ENCODE measurements at regions of chr6 and their contacts with region 1.

Region 1: DNA sequence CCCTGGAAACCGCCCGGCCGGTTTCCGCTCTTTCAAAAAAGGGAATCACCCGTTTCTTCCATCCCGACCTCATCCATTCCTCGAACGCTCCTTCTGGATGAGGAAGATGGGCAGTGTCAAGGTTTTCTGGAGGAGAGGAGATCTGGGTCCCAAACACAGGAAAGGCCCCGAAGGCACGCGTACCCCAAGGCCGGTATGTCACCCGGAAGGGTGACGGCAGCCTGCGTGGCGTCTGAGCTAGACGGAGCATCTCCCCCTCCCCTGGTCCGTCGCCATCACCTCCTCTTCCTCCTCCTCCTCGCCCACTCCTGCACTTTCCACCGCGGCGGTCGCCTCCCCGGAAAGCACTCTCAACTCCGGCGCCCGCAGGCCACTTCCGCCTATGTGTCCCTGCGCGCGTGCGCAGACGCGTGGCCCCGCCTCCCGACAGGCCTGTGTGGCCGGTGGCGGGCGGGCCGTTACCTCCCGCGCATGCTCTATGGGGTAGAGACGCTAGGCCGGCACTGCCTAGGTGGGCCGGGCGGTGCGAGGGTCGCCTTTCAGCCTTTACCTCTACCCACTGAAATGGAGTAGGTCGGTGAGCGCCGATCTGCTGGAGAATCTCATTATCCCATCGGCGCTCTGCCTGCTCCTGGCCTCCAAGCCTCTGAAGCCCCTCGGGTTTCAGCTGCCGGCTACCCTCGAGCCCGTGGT is at the start of gene SLC35B3:
- DNase-seq: peak; percentile 93 to 99 (median 97)
- ATAC-seq: peak; percentile 93
- H3K4me3 ChIP-seq: peak within 1 kb of the TSS; percentile 87 to 94
- H3K4me3 Mint-ChIP-seq: peak within 1 kb of the TSS; percentile 91
- H3K27ac ChIP-seq: peak within 1 kb of the TSS; percentile 89 to 90
- H3K27ac Mint-ChIP-seq: peak within 1 kb of the TSS; percentile 98
- H3K4me1 ChIP-seq: peaks cover 27% of the 10 kb centered on the region
- H3K4me1 Mint-ChIP-seq: peaks cover 49% of the 10 kb centered on the region
- H3K27me3 ChIP-seq: no peaks in the 10 kb centered on the region
- H3K27me3 Mint-ChIP-seq: no peaks in the 10 kb centered on the region
- CTCF ChIP-seq: no peak
- total RNA-seq, gene SLC35B3: 1.8 to 2.1 TPM

Region 2: DNA sequence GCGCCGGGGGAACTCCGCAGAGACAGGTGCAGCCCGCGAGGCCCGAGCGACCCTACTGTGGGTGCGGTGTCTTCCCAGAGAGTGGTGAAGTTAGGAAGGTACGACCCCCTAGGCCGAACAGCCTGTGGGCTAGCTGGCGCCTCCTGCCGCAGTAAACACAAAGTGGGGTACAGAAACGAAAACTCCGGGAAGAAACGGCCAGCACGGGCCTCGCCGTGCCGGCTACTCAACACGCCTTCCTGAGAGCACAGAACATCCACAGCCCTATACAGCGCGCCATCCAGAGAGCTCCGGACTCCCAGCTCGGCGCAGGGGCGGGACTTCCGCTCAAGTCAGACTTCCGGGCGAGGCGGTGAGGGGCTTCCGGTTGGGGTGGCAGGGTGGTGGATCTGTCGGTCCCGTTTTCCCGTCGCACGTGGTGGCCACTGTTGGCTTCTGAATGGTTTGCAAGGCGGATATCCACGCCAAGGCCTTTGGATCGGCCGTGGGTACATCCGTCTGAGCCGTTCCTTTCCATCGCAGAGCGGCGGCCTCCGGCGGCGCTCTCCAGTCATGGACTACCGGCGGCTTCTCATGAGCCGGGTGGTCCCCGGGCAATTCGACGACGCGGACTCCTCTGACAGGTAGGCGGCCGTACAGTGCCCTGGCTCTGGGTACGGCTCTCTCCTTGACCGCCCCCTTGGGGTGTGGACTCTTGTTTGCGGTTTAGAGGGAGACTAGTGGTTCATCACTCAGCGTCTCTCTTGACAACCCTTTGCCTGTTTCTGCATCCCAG is 1045.7 kb before region 1 on chr6 and contains the starts of genes CAGE1 and RIOK1:
- CTCF ChIA-PET with region 1: no interaction called
- POLR2A ChIA-PET with region 1: no interaction called
- intact Hi-C with region 1: loop called in 1 of 2 experiments (anchors 2 kb)
- DNase-seq: peak; percentile 85 to 97 (median 95)
- ATAC-seq: peak; percentile 89
- H3K4me3 ChIP-seq: peak within 1 kb of the TSS; percentile 77 to 91
- H3K4me3 Mint-ChIP-seq: peak within 1 kb of the TSS; percentile 98
- H3K27ac ChIP-seq: peak within 1 kb of the TSS; percentile 90 to 97
- H3K27ac Mint-ChIP-seq: peak within 1 kb of the TSS; percentile 100
- H3K4me1 ChIP-seq: peaks cover 29% of the 10 kb centered on the region
- H3K4me1 Mint-ChIP-seq: peaks cover 49% of the 10 kb centered on the region
- H3K27me3 ChIP-seq: no peaks in the 10 kb centered on the region
- H3K27me3 Mint-ChIP-seq: no peaks in the 10 kb centered on the region
- CTCF ChIP-seq: no peak
- total RNA-seq, gene CAGE1: 0.33 to 0.49 TPM
- total RNA-seq, gene RIOK1: 47.3 to 56.3 TPM

Region 3: GRCh38 chr6:7910654-7911344 is 524.5 kb before region 1 on chr6 and contains the start of gene TXNDC5:
- CTCF ChIA-PET with region 1: no interaction called
- POLR2A ChIA-PET with region 1: no interaction called
- intact Hi-C with region 1: loop called in 1 of 2 experiments (anchors 10 kb)
- DNase-seq: peak; percentile 38 to 81 (median 66)
- ATAC-seq: peak; percentile 87
- H3K4me3 ChIP-seq: peak within 1 kb of the TSS; percentile 69 to 75
- H3K4me3 Mint-ChIP-seq: peak within 1 kb of the TSS; percentile 77
- H3K27ac ChIP-seq: no peak within 1 kb of the TSS
- H3K27ac Mint-ChIP-seq: no peak within 1 kb of the TSS
- H3K4me1 ChIP-seq: peaks cover 15% of the 10 kb centered on the region
- H3K4me1 Mint-ChIP-seq: peaks cover 8% of the 10 kb centered on the region
- H3K27me3 ChIP-seq: no peaks in the 10 kb centered on the region
- H3K27me3 Mint-ChIP-seq: peaks cover 2% of the 10 kb centered on the region
- CTCF ChIP-seq: no peak
- total RNA-seq, gene TXNDC5: 5.8 to 7.6 TPM

Region 4: DNA sequence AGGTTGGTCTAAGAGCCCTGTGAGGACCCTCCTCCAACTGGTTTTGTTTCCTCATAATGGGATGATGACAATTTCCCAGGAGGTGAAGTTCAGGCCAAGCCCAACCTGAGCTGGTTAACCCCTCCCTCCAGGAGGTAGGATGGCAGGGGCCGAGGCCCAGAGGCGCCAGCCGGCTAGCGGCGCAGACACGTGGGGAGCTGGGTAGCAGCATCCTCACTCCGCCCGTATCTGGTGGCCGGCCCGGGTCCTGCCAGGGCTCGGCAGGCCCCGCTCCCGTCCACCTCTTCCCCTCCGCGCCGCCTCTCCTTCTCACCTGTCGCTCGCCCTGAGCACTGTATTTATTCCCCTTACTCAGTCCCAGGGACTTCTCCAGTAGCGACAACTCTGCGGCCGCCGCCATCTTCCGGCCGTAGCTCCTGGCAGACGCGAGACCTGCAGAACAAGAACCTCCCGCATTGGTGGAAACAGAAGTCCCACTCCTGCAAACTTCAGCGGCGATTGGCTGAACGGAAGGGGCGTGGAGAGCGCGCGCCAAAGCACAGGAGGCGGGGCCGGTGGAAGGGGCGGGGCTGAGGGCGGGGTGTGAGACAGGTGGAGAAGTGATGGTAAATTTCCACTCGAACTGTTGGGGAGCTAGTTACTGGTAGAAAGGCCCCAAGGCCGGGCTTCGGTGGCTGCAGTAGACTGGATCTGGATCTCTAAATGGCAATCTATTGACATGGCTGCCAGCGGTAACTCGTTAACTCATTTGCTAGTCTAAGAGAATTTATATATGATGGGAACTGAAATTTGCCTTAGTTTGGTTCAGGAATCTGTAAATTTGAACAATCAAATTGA is 333.0 kb before region 1 on chr6 and contains the start of gene EEF1E1:
- CTCF ChIA-PET with region 1: no interaction called
- POLR2A ChIA-PET with region 1: interaction called, 3 read pairs
- intact Hi-C with region 1: loop called (anchors 1 to 5 kb)
- DNase-seq: peak; percentile 96 to 98 (median 97)
- ATAC-seq: peak; percentile 97
- H3K4me3 ChIP-seq: peak within 1 kb of the TSS; percentile 81 to 92
- H3K4me3 Mint-ChIP-seq: peak within 1 kb of the TSS; percentile 99
- H3K27ac ChIP-seq: peak within 1 kb of the TSS; percentile 75 to 79
- H3K27ac Mint-ChIP-seq: peak within 1 kb of the TSS; percentile 98
- H3K4me1 ChIP-seq: peaks cover 12% of the 10 kb centered on the region
- H3K4me1 Mint-ChIP-seq: peaks cover 33% of the 10 kb centered on the region
- H3K27me3 ChIP-seq: no peaks in the 10 kb centered on the region
- H3K27me3 Mint-ChIP-seq: peaks cover 14% of the 10 kb centered on the region
- CTCF ChIP-seq: no peak
- total RNA-seq, gene EEF1E1: 19.9 to 20.7 TPM

Region 5: DNA sequence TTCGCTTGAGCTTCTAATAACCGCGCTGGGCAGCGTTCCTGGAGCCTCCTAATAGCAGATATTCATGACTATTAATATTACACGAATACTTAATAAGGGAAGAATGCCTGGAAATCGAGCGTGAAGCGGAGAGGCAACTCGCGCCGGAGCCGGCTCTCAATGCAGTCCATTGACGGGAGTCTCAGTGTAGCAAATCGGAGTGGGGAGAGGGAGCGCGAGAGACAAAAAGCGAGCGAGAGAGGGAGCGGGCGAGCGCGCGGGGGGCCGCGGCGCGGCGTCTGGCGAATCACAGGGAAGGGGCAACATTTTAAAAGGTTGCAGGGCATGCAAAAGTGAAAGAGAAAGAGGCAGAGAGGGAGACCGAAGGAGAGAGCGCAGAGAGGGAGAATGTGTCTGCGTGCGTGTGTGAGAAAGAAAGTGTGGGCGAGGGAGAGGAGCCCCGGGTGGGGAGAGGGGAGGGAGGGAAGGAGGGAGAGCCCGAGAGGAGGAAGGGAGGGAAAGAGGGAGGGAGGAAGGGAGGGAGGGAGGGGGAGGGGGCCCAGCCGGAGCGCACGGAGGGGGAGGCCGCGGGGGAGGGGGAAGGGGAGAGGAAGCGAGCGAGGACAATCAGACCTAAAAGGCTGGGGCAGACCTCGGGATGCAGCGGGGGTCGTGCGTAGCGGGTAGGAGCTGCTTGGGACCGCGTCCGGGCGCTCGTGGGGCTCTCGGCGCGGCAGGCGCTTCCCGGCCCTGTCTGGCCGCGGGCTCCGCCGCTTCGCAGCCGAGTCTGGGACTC is 1976.9 kb after region 1 on chr6:
- CTCF ChIA-PET with region 1: no interaction called
- POLR2A ChIA-PET with region 1: no interaction called
- intact Hi-C with region 1: loop called (anchors 5 to 10 kb)
- DNase-seq: peak in 4 of 9 experiments; percentile 29 to 65 (median 50)
- ATAC-seq: peak; percentile 75
- H3K4me3 ChIP-seq: peak overlapping the region; percentile 64 to 88
- H3K4me3 Mint-ChIP-seq: peak overlapping the region; percentile 88
- H3K27ac ChIP-seq: no peak overlapping the region
- H3K27ac Mint-ChIP-seq: peak overlapping the region; percentile 32
- H3K4me1 ChIP-seq: peaks cover 35% of the 10 kb centered on the region
- H3K4me1 Mint-ChIP-seq: peaks cover 41% of the 10 kb centered on the region
- H3K27me3 ChIP-seq: peaks cover 59 to 64% of the 10 kb centered on the region in 2 experiments
- H3K27me3 Mint-ChIP-seq: peaks cover 81% of the 10 kb centered on the region
- CTCF ChIP-seq: no peak